Mammary epithelial cell (primary cell): ENCODE measurements at regions of chr11 and their contacts with region 1.

Region 1: GRCh38 chr11:58254936-58255335 is 13.1 kb downstream of the OR10W1 start:
- DNase-seq: no peak
- H3K4me3 ChIP-seq: no peak overlapping the region
- H3K27ac ChIP-seq: no peak overlapping the region
- H3K4me1 ChIP-seq: no peaks in the 10 kb centered on the region
- H3K27me3 ChIP-seq: no peaks in the 10 kb centered on the region
- CTCF ChIP-seq: no peak

Region 2: GRCh38 chr11:57772562-57772961 is 482.4 kb before region 1 on chr11:
- CTCF ChIA-PET with region 1: interaction called, 14 read pairs
- dilution Hi-C with region 1: no loop called
- in situ Hi-C with region 1: no loop called
- intact Hi-C with region 1: no loop called
- DNase-seq: peak; percentile 52
- H3K4me3 ChIP-seq: no peak overlapping the region
- H3K27ac ChIP-seq: no peak overlapping the region
- H3K4me1 ChIP-seq: peaks cover 35% of the 10 kb centered on the region
- H3K27me3 ChIP-seq: no peaks in the 10 kb centered on the region
- CTCF ChIP-seq: no peak